Activated CD8-positive, alpha-beta T cell treated with anti-CD3 and anti-CD28 coated beads, Interleukin-2, amount 10 ng/mL, durations not matched to agents 7 days and 5 days (primary cell): ENCODE measurements at regions of chr17 and their contacts with region 1.

Region 1: GRCh38 chr17:34637548-34638525 is 58.5 kb downstream of the TMEM132E start:
- DNase-seq: peak; percentile 87
- ATAC-seq: peak; percentile 99
- H3K4me3 Mint-ChIP-seq: peak overlapping the region; percentile 30
- H3K27ac Mint-ChIP-seq: no peak overlapping the region
- H3K4me1 Mint-ChIP-seq: peaks cover 3% of the 10 kb centered on the region
- H3K27me3 Mint-ChIP-seq: peaks cover 16% of the 10 kb centered on the region

Region 2: GRCh38 chr17:34420254-34420766 is 217.5 kb before region 1 on chr17:
- CTCF ChIA-PET with region 1: interaction called, 13 read pairs
- POLR2A ChIA-PET with region 1: no interaction called
- DNase-seq: peak; percentile 70
- ATAC-seq: peak; percentile 57
- H3K4me3 Mint-ChIP-seq: no peak overlapping the region
- H3K27ac Mint-ChIP-seq: no peak overlapping the region
- H3K4me1 Mint-ChIP-seq: no peaks in the 10 kb centered on the region
- H3K27me3 Mint-ChIP-seq: peaks cover 33% of the 10 kb centered on the region

Region 3: GRCh38 chr17:34519282-34519681 is 118.6 kb before region 1 on chr17:
- CTCF ChIA-PET with region 1: no interaction called
- POLR2A ChIA-PET with region 1: no interaction called
- DNase-seq: peak; percentile 27
- ATAC-seq: no peak
- H3K4me3 Mint-ChIP-seq: no peak overlapping the region
- H3K27ac Mint-ChIP-seq: no peak overlapping the region
- H3K4me1 Mint-ChIP-seq: no peaks in the 10 kb centered on the region
- H3K27me3 Mint-ChIP-seq: peaks cover 5% of the 10 kb centered on the region

Region 4: DNA sequence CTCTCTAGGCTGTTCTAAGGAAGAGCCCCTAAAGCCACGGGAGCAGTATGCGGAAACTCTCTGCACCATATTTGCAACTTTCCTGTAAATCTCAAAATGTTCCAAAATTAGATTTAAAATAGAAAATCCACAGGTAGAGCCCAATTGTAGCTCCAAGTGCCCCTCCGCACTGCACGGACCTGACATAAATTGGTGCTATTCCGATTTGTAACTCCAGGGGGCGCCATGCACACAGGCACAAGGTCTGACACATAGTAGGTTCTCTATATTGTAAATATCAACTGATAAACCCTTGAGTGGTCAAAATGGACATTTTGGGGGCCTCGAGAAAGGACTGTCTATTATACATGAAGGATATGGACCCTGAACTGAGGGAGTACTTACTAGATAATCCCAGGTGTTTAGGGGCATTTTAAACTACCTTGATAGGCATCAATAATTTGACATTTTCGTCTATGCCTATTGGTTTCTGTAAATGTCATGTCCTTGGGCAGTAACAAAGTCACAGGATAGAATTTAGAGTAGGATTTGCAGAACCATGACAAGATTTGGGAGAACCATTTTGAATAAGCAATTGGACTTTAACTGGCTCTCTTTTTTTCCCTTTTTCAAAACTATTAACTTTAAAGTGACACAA is 95.0 kb before region 1 on chr17:
- CTCF ChIA-PET with region 1: interaction called, 23 read pairs
- POLR2A ChIA-PET with region 1: no interaction called
- DNase-seq: peak; percentile 59
- ATAC-seq: peak; percentile 49
- H3K4me3 Mint-ChIP-seq: no peak overlapping the region
- H3K27ac Mint-ChIP-seq: no peak overlapping the region
- H3K4me1 Mint-ChIP-seq: no peaks in the 10 kb centered on the region
- H3K27me3 Mint-ChIP-seq: peaks cover 28% of the 10 kb centered on the region